Mammary epithelial cell (primary cell): ENCODE measurements at regions of chr21 and their contacts with region 1.

Region 1: GRCh38 chr21:39388038-39388810 is 39.3 kb upstream of the HMGN1 start:
- DNase-seq: peak; percentile 79
- H3K4me3 ChIP-seq: peak overlapping the region; percentile 54 to 61 (median 55)
- H3K27ac ChIP-seq: peak overlapping the region; percentile 68
- H3K4me1 ChIP-seq: peaks cover 31% of the 10 kb centered on the region
- H3K27me3 ChIP-seq: no peaks in the 10 kb centered on the region
- CTCF ChIP-seq: peak; percentile 88 to 96

Region 2: DNA sequence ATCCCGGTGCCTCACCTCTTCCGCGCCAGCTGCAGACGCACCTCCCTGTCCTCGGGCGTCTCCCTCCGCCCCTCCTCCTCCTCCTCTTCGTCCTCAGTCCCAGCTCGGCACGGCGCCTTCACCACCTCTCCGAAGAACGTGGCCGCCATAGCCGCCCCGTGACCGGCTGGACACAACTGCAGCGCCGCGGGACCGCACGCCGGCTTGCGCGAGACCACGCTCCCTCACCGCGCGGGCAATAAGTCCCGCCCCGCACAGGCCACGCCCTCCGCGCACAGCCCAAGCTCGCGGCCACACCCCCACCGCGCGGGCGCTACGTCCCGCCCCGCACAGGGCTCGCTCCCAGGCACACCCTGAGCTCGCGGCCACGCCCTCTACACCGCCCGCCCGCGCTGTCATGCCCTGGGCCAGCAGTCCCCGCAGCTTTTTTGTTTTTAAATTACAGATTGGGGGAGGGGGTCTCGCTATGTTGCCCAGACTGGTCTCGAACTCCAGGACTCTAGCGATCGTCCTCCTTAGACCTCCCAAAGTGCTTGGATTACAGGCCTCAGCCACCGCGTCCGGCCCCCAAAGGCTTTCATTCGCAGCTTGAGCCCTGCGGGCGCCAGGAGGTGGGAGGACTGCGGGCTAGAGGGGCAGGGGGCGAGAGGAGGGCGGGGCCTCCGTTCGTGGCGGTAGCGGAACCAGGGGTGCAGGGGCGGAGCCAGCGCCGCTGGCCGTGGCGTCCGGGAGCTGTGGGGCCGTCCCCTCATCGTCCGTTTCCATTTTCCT is 204.8 kb before region 1 on chr21 and contains the start of gene PSMG1:
- CTCF ChIA-PET with region 1: interaction called, 4 read pairs
- dilution Hi-C with region 1: no loop called
- in situ Hi-C with region 1: no loop called
- intact Hi-C with region 1: loop called (anchors 1 kb)
- DNase-seq: peak; percentile 94
- H3K4me3 ChIP-seq: peak within 1 kb of the TSS; percentile 67 to 93 (median 86)
- H3K27ac ChIP-seq: peak within 1 kb of the TSS; percentile 89
- H3K4me1 ChIP-seq: peaks cover 14% of the 10 kb centered on the region
- H3K27me3 ChIP-seq: no peaks in the 10 kb centered on the region
- CTCF ChIP-seq: no peak
- total RNA-seq, gene PSMG1: 30.7 to 82.7 TPM

Region 3: DNA sequence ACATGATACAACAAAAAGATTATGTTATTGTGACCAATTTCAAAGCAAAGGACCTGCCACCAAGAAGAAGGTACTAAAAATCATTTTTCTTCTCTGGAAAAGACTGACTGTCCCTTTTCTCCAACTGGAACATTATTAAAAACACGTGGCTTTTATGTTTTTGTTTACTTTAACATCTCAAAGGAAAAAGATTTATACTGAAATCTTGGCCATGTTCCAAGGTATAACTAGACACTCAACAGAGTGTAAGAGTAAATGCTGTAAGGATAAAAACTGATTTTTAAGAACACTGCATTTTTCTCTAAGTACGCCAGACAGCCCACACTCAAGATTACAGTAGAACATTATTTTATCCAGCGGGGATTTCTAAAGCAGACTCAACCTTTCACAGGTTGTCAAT is 136.9 kb before region 1 on chr21:
- CTCF ChIA-PET with region 1: no interaction called
- dilution Hi-C with region 1: no loop called
- in situ Hi-C with region 1: no loop called
- intact Hi-C with region 1: no loop called
- DNase-seq: no peak
- H3K4me3 ChIP-seq: no peak overlapping the region
- H3K27ac ChIP-seq: no peak overlapping the region
- H3K4me1 ChIP-seq: no peaks in the 10 kb centered on the region
- H3K27me3 ChIP-seq: no peaks in the 10 kb centered on the region
- CTCF ChIP-seq: no peak

Region 4: DNA sequence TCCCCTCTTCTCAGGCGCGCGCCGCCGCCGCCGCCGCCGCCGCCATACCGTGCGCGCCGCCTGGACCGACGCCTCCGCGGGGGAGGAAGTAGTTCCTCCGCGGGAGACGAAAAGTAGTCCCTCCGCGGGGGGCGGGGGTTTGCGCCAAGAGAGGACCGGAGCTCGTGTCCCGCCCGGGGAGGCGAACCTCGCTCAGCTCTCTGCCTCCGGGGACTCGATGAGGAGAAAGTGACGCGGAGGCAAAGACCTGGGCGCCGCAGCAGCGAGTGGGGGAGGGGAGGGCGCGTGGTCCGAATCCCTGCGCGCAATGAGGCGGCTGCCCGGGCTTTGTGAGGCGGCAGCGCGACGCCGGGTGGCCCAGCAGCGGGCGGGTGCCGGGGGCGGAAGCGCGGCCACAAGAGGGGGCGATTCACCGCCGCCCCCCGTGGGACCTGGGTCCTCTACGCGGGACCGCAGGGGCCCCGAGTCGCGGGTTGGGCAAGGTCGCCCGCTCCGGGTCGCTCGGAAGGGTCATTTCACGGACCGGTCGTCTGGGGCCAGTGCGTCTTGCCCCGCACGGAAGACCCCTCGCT is 74.6 kb before region 1 on chr21 and contains the start of gene BRWD1:
- CTCF ChIA-PET with region 1: no interaction called
- dilution Hi-C with region 1: no loop called
- in situ Hi-C with region 1: loop called in 1 of 2 experiments (anchors 10 kb)
- intact Hi-C with region 1: loop called (anchors 1 kb)
- DNase-seq: peak; percentile 82
- H3K4me3 ChIP-seq: peak within 1 kb of the TSS; percentile 63 to 86 (median 65)
- H3K27ac ChIP-seq: peak within 1 kb of the TSS; percentile 86
- H3K4me1 ChIP-seq: peaks cover 32% of the 10 kb centered on the region
- H3K27me3 ChIP-seq: no peaks in the 10 kb centered on the region
- CTCF ChIP-seq: no peak
- total RNA-seq, gene BRWD1: 29.2 to 60.0 TPM

Region 5: GRCh38 chr21:39349211-39350093 is 38.8 kb before region 1 on chr21:
- CTCF ChIA-PET with region 1: interaction called, 5 read pairs
- dilution Hi-C with region 1: loop called (anchors 5 kb)
- in situ Hi-C with region 1: no loop called
- intact Hi-C with region 1: loop called (anchors 1 kb)
- DNase-seq: peak; percentile 97
- H3K4me3 ChIP-seq: peak overlapping the region; percentile 63 to 75 (median 64)
- H3K27ac ChIP-seq: peak overlapping the region; percentile 63
- H3K4me1 ChIP-seq: peaks cover 19% of the 10 kb centered on the region
- H3K27me3 ChIP-seq: no peaks in the 10 kb centered on the region
- CTCF ChIP-seq: no peak

Region 6: GRCh38 chr21:39400173-39400572 is 11.9 kb after region 1 on chr21:
- CTCF ChIA-PET with region 1: no interaction called
- dilution Hi-C with region 1: no loop called
- in situ Hi-C with region 1: no loop called
- intact Hi-C with region 1: no loop called
- DNase-seq: peak; percentile 19
- H3K4me3 ChIP-seq: no peak overlapping the region
- H3K27ac ChIP-seq: no peak overlapping the region
- H3K4me1 ChIP-seq: no peaks in the 10 kb centered on the region
- H3K27me3 ChIP-seq: no peaks in the 10 kb centered on the region
- CTCF ChIP-seq: no peak

Region 7: DNA sequence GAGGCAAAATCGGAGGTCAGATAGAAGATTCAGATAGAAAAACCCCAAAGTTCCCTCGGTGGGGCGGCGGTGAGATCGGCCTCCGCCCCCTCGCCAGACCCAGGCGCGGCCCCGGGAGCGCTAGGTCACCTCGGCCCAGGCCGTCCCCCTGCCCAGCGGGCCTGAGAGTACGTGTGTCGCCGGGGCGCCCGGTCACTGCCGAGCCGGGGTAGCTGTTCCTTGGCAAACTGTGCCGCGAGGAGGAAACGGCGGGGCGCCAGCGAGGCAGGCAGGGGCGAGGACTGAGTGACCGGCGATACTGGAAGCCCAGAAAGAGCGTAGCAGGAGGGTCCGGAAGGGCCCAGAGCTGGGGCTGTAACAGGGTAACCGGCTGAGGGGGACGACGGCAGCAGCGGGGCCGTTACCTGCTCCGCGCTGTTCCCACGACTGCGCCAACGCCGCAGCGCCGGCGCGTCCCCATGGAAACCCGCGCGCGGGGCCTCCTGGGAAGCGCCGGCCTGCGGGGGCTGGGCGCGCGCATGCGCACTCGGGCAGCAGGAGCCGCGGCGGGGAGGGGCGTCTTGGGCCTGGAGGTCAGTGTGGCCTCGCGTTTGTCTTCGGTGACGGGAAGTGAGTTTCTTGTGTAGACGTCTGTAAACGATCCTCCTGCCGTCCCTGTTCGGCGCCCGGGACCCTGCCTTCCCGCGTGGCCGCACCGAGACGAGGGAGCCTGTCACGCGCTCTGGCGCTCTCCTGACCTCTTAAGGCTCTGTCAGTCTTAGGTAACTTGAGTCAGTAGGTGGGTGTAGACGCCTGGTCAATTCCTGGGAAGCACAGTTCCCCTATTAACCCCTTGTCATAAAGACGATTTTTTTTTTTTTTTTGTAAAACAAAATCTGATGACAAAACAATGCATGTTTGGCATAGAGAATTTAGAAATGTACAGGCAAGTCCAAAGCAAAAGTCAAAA is 57.4 kb after region 1 on chr21 and contains the start of gene LCA5L:
- CTCF ChIA-PET with region 1: interaction called, 11 read pairs
- dilution Hi-C with region 1: no loop called
- in situ Hi-C with region 1: no loop called
- intact Hi-C with region 1: loop called (anchors 1 kb)
- DNase-seq: peak; percentile 84
- H3K4me3 ChIP-seq: peak within 1 kb of the TSS; percentile 81 to 94 (median 93)
- H3K27ac ChIP-seq: peak within 1 kb of the TSS; percentile 70
- H3K4me1 ChIP-seq: no peaks in the 10 kb centered on the region
- H3K27me3 ChIP-seq: no peaks in the 10 kb centered on the region
- CTCF ChIP-seq: no peak
- total RNA-seq, gene LCA5L: 1.6 to 2.3 TPM

Region 8: GRCh38 chr21:39467746-39468145 is 79.5 kb after region 1 on chr21:
- CTCF ChIA-PET with region 1: no interaction called
- dilution Hi-C with region 1: no loop called
- in situ Hi-C with region 1: no loop called
- intact Hi-C with region 1: no loop called
- DNase-seq: no peak
- H3K4me3 ChIP-seq: no peak overlapping the region
- H3K27ac ChIP-seq: no peak overlapping the region
- H3K4me1 ChIP-seq: no peaks in the 10 kb centered on the region
- H3K27me3 ChIP-seq: peaks cover 2% of the 10 kb centered on the region
- CTCF ChIP-seq: no peak